ENCODE measurements at regions of chr2 and their contacts with region 1.

Region 1: GRCh38 chr2:166180951-166181812 is 53.4 kb upstream of the SCN1A start:
- DNase-seq: peak; percentile 67
- H3K4me3 Mint-ChIP-seq: no peak overlapping the region
- H3K27ac Mint-ChIP-seq: no peak overlapping the region
- H3K4me1 Mint-ChIP-seq: peaks cover 17% of the 10 kb centered on the region
- H3K27me3 Mint-ChIP-seq: peaks cover 11% of the 10 kb centered on the region
- CTCF ChIP-seq: peak; percentile 51

Region 2: DNA sequence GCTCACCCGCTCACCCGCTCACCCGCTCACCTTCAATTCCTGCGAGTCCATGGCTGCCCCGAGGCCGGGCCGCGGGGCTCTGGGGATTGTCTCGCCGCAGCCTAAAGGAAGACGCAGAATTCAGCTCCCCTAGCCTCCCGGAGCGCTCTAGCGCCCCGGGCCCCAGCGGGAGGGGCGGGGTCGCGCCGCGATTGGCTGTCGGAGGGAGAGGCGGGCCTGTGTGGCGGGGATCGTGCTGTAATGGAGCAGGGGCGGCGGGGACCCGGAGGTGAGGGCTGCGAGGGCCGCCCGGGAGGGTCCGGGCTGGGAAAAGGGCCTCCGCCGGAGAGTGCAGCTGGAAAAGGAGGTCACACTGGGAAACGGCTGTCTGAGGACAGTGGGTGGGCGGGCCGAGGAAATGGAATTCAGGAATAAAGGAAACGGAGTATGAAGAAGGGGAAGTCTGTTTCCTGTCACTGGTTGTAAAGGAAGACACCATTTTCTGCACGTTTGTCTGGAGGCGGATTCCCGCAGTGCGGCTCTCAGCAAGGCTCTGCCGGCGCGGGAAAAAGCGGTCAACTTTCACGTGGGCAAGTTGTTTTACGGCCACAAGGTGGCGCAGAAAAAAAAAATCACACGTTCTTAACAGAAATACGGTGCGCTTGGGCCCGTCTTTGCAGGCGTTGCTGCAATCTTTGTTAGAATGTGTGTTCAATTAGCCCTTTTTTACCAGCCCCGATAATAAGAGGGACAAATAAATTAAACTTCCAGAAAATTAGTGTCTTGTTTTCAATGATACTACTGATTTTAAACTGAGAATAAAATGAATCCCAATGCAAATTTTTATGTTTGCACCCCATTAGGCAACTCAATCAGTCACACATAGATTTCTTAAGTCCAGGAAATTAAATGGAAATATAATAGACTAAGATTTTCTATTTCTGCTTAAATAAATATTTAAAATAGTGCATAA is 227.3 kb before region 1 on chr2 and contains the start of gene TTC21B:
- CTCF ChIA-PET with region 1: interaction called, 10 read pairs
- POLR2A ChIA-PET with region 1: interaction called, 3 read pairs
- intact Hi-C with region 1: no loop called
- DNase-seq: peak; percentile 91
- H3K4me3 Mint-ChIP-seq: no peak within 1 kb of the TSS
- H3K27ac Mint-ChIP-seq: no peak within 1 kb of the TSS
- H3K4me1 Mint-ChIP-seq: peaks cover 11% of the 10 kb centered on the region
- H3K27me3 Mint-ChIP-seq: no peaks in the 10 kb centered on the region
- CTCF ChIP-seq: peak; percentile 76
- total RNA-seq, gene TTC21B: 9.8 and 10.9 TPM in 2 replicates

Region 3: GRCh38 chr2:166193407-166193806 is 12.2 kb after region 1 on chr2:
- CTCF ChIA-PET with region 1: interaction called, 32 read pairs
- POLR2A ChIA-PET with region 1: interaction called, 4 read pairs
- intact Hi-C with region 1: no loop called
- DNase-seq: no peak
- H3K4me3 Mint-ChIP-seq: no peak overlapping the region
- H3K27ac Mint-ChIP-seq: no peak overlapping the region
- H3K4me1 Mint-ChIP-seq: no peaks in the 10 kb centered on the region
- H3K27me3 Mint-ChIP-seq: no peaks in the 10 kb centered on the region
- CTCF ChIP-seq: no peak

Region 4: GRCh38 chr2:166384774-166385173 is 203.6 kb after region 1 on chr2:
- CTCF ChIA-PET with region 1: interaction called, 34 read pairs
- POLR2A ChIA-PET with region 1: no interaction called
- intact Hi-C with region 1: loop called (anchors 5 kb)
- DNase-seq: peak; percentile 45
- H3K4me3 Mint-ChIP-seq: no peak overlapping the region
- H3K27ac Mint-ChIP-seq: no peak overlapping the region
- H3K4me1 Mint-ChIP-seq: peaks cover 6% of the 10 kb centered on the region
- H3K27me3 Mint-ChIP-seq: peaks cover 43% of the 10 kb centered on the region
- CTCF ChIP-seq: peak; percentile 50

Region 5: GRCh38 chr2:166516712-166517303 is 335.6 kb after region 1 on chr2:
- CTCF ChIA-PET with region 1: interaction called, 24 read pairs
- POLR2A ChIA-PET with region 1: no interaction called
- intact Hi-C with region 1: loop called (anchors 1 kb)
- DNase-seq: peak; percentile 44
- H3K4me3 Mint-ChIP-seq: no peak overlapping the region
- H3K27ac Mint-ChIP-seq: no peak overlapping the region
- H3K4me1 Mint-ChIP-seq: no peaks in the 10 kb centered on the region
- H3K27me3 Mint-ChIP-seq: peaks cover 85% of the 10 kb centered on the region
- CTCF ChIP-seq: peak; percentile 58

Region 6: GRCh38 chr2:167745667-167746066 is 1564.5 kb after region 1 on chr2:
- CTCF ChIA-PET with region 1: no interaction called
- POLR2A ChIA-PET with region 1: no interaction called
- intact Hi-C with region 1: no loop called
- DNase-seq: no peak
- H3K4me3 Mint-ChIP-seq: no peak overlapping the region
- H3K27ac Mint-ChIP-seq: no peak overlapping the region
- H3K4me1 Mint-ChIP-seq: peaks cover 12% of the 10 kb centered on the region
- H3K27me3 Mint-ChIP-seq: peaks cover 33% of the 10 kb centered on the region
- CTCF ChIP-seq: no peak